Transverse colon (tissue), 4 donors: ENCODE measurements at regions of chr4 and their contacts with region 1.

Region 1: GRCh38 chr4:184733654-184734524 is at the start of gene CENPU:
- DNase-seq: peak; percentile 97
- H3K4me3 ChIP-seq: peak within 1 kb of the TSS; percentile 45 to 74 (median 62)
- H3K27ac ChIP-seq: peak within 1 kb of the TSS; percentile 69 to 79 (median 74)
- H3K4me1 ChIP-seq: peaks cover 0 to 26% (median 8%) of the 10 kb centered on the region in 4 donors
- H3K27me3 ChIP-seq: no peaks in the 10 kb centered on the region
- CTCF ChIP-seq: peak in 1 of 5 experiments; percentile 13
- EP300 ChIP-seq: peak; percentile 18
- POLR2A ChIP-seq: peak; percentile 46
- total RNA-seq, gene CENPU: 1.5 to 5.6 (median 4.1) TPM

Region 2: DNA sequence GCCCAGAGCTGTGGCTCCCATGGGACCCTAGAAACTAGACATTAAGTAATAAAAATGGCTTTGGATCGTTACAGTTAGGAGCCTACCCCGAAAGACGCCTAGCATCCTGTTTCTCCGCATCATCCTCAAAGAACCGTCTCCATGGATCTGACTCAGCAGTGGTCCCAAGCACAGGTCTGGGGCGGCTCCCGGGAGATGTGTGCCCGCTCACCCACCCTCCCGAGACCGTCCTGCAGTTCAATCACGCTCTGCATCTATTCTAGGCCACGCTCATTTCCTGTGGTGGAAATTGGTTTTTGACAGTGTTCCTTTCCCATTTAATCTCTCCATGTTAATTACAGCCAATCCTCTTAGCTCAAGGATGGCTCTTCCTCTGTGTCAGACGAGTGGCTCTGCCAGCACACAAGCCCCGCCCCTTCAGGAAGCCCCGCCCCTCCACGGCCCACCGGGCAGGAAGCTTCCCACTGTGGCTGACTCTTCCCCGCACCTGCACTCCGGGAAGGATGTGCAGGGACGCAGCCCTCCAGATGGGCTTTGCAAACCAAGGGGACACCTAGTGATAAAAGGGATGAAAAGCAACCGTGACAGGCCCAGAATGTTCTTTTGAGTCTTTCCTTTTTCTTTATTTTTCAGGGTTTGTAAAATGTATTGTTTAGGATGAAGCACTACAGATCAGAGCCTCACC is 249.9 kb after region 1 on chr4:
- in situ Hi-C with region 1: loop called in 1 of 4 experiments (anchors 25 kb)
- intact Hi-C with region 1: no loop called
- DNase-seq: peak; percentile 71
- H3K4me3 ChIP-seq: no peak overlapping the region
- H3K27ac ChIP-seq: no peak overlapping the region
- H3K4me1 ChIP-seq: peaks cover 0 to 6% (median 3%) of the 10 kb centered on the region in 4 donors
- H3K27me3 ChIP-seq: peaks cover 8% of the 10 kb centered on the region
- CTCF ChIP-seq: peak; percentile 33 to 51 (median 34)
- EP300 ChIP-seq: no peak
- POLR2A ChIP-seq: no peak